ENCODE measurements at regions of chr1 and their contacts with region 1.

Region 1: DNA sequence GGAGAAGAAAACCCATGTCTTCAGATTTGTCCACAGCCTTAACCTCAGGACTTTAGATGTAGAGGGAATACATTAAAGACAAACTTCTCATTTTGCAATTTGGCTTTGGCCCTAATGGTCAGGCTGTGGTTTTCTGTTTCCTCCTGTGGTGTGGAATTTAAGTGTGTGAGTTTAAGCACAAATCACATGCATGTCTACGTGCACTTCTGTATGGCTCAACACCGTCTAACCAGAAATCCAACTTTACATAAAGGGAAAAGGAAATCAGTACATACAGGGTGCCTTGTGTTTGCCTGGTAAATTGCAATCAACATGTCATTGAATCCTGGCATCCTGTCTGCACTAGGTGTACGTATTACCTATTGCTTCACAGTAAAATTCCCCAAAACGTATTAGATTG is 1.2 kb upstream of the ZNF124 start:
- DNase-seq: no peak
- ATAC-seq: no peak
- H3K4me3 ChIP-seq: no peak overlapping the region
- H3K27ac ChIP-seq: no peak overlapping the region
- H3K4me1 ChIP-seq: no peaks in the 10 kb centered on the region; a peak in 1 of 4 replicates
- H3K27me3 ChIP-seq: no peaks in the 10 kb centered on the region
- CTCF ChIP-seq: no peak
- POLR2A ChIP-seq: no peak
- RAD21 ChIP-seq: no peak

Region 2: GRCh38 chr1:246705368-246705767 is 467.6 kb before region 1 on chr1:
- CTCF ChIA-PET with region 1: no interaction called
- POLR2A ChIA-PET with region 1: no interaction called
- RAD21 ChIA-PET with region 1: no interaction called
- intact Hi-C with region 1: no loop called
- DNase-seq: no peak
- ATAC-seq: no peak
- H3K4me3 ChIP-seq: no peak overlapping the region
- H3K27ac ChIP-seq: no peak overlapping the region
- H3K4me1 ChIP-seq: no peaks in the 10 kb centered on the region
- H3K27me3 ChIP-seq: no peaks in the 10 kb centered on the region
- CTCF ChIP-seq: no peak
- POLR2A ChIP-seq: no peak
- RAD21 ChIP-seq: no peak

Region 3: DNA sequence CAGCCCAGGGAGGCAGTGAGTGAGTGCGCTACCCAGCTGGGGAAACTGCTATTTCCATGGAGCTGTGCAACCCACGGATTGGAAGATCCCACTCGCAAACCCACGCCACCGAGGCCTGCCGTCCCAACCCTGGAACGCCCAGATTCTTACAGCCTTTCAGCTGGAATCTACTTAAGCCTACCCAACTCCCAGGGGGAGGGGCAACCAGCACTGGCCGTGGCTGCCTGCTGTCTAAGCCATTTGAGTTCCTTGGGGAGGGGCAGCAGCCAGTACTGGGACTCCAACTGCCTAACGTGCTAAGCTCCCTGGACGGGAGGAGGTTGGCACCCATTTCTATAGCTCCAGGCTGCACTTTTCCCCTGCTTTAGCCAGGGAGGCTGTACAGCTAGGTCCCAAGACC is 41.8 kb before region 1 on chr1:
- CTCF ChIA-PET with region 1: no interaction called
- POLR2A ChIA-PET with region 1: no interaction called
- RAD21 ChIA-PET with region 1: no interaction called
- intact Hi-C with region 1: loop called (anchors 2 kb)
- DNase-seq: no peak
- ATAC-seq: no peak
- H3K4me3 ChIP-seq: no peak overlapping the region
- H3K27ac ChIP-seq: no peak overlapping the region
- H3K4me1 ChIP-seq: no peaks in the 10 kb centered on the region
- H3K27me3 ChIP-seq: no peaks in the 10 kb centered on the region
- CTCF ChIP-seq: no peak
- POLR2A ChIP-seq: no peak
- RAD21 ChIP-seq: no peak